Right cardiac atrium (tissue), 5 donors: ENCODE measurements at regions of chr6 and their contacts with region 1.

Region 1: GRCh38 chr6:158697811-158698210 is 48.0 kb downstream of the SYTL3 start:
- DNase-seq: peak in 1 of 3 donors; percentile 22
- ATAC-seq: peak in 1 of 2 donors; percentile 87
- H3K4me3 ChIP-seq: no peak overlapping the region
- H3K27ac ChIP-seq: no peak overlapping the region
- H3K4me1 ChIP-seq: no peaks in the 10 kb centered on the region
- H3K27me3 ChIP-seq: no peaks in the 10 kb centered on the region

Region 2: GRCh38 chr6:158213925-158214674 is 483.7 kb before region 1 on chr6:
- intact Hi-C with region 1: loop called in 1 of 4 experiments (anchors 10 kb)
- DNase-seq: peak; percentile 53 to 82 (median 73)
- ATAC-seq: peak; percentile 93 to 98
- H3K4me3 ChIP-seq: no peak overlapping the region
- H3K27ac ChIP-seq: no peak overlapping the region
- H3K4me1 ChIP-seq: no peaks in the 10 kb centered on the region
- H3K27me3 ChIP-seq: no peaks in the 10 kb centered on the region

Region 3: GRCh38 chr6:158621694-158622544 is 75.9 kb before region 1 on chr6:
- intact Hi-C with region 1: no loop called
- DNase-seq: peak in 2 of 3 donors; percentile 44 to 46
- ATAC-seq: peak in 1 of 2 donors; percentile 5
- H3K4me3 ChIP-seq: no peak overlapping the region
- H3K27ac ChIP-seq: no peak overlapping the region
- H3K4me1 ChIP-seq: peaks cover 8% of the 10 kb centered on the region
- H3K27me3 ChIP-seq: no peaks in the 10 kb centered on the region

Region 4: DNA sequence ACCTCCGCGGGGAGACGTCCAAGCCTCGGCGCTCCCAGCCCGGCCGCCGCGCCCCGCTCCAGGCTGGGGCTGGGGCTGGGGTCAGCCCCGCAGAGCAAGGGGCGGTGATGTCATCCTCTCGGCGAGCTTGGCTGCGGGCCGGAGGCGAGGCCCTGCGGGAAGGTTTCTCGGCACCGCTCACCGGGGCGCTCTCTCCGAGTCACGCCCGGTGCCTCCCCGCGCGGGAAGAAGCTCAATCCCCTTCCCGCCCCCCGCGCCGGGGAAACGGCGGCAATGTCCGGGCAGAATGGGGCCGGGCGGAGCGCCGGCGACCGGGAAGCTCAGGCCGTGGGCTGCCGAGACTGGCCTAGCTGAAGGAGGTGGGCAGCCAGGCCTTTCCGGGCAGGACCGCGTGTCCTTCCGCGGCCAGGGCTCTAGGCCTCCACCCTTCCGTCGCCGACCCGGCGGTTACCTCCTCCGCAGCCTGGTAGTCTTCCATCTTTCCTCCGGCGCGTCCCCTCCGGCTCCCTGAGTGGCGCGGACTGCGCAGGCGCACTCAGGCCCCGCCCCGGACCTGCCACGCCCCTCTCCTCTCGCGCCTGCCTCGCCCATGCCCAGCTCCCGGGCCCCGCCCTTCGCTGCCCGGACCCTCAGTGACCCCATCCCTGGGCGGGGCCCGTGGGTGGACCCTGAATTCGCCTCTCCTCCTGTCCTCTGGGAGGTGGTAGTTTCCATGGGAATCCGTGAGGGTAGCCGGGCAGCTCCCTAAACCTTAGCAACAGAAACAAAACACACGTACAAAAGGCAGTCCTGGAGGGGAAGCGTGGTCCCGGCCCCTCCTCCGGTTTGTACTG is 53.4 kb before region 1 on chr6 and contains the start of gene DYNLT1:
- intact Hi-C with region 1: loop called in 1 of 4 experiments (anchors 10 kb)
- DNase-seq: peak; percentile 96 to 98 (median 98)
- ATAC-seq: peak; percentile 96 to 97
- H3K4me3 ChIP-seq: peak within 1 kb of the TSS; percentile 68
- H3K27ac ChIP-seq: peak within 1 kb of the TSS; percentile 84
- H3K4me1 ChIP-seq: peaks cover 7% of the 10 kb centered on the region
- H3K27me3 ChIP-seq: no peaks in the 10 kb centered on the region
- total RNA-seq, gene DYNLT1: 97.7 to 115 (median 105) TPM